ENCODE measurements at regions of chr20 and their contacts with region 1.

Region 1: GRCh38 chr20:50179507-50180016 is 11.1 kb upstream of the CEBPB start:
- DNase-seq: no peak
- H3K4me3 ChIP-seq: no peak overlapping the region
- H3K27ac ChIP-seq: no peak overlapping the region
- H3K4me1 ChIP-seq: no peaks in the 10 kb centered on the region
- H3K27me3 ChIP-seq: no peaks in the 10 kb centered on the region
- CTCF ChIP-seq: no peak

Region 2: GRCh38 chr20:50120897-50121693 is 58.5 kb before region 1 on chr20:
- CTCF ChIA-PET with region 1: no interaction called
- dilution Hi-C with region 1: no loop called
- in situ Hi-C with region 1: loop called in 1 of 2 experiments (anchors 10 kb)
- intact Hi-C with region 1: loop called (anchors 1 kb)
- DNase-seq: no peak
- H3K4me3 ChIP-seq: no peak overlapping the region
- H3K27ac ChIP-seq: no peak overlapping the region
- H3K4me1 ChIP-seq: peaks cover 4% of the 10 kb centered on the region
- H3K27me3 ChIP-seq: no peaks in the 10 kb centered on the region
- CTCF ChIP-seq: peak; percentile 96 to 99

Region 3: DNA sequence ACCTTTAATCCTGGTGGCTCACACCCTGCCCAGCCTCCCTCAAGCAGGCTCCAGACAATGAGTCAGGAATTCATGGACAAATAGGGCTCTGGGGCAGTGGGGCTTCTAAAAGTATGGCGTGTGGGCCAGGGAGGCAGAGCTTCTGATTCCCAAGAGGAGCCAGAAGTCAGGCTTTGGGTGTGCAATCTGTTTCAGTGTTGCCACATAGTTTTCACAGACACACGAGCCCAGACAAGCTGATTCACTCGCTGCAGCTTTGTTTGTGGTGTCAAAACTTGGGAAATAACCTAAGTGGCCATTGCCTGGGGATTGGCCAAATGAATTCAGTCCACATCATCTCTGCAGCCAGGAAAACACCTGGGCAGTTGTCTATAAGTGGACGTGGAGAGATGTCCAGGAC is 35.2 kb before region 1 on chr20:
- CTCF ChIA-PET with region 1: interaction called, 13 read pairs
- dilution Hi-C with region 1: no loop called
- in situ Hi-C with region 1: no loop called
- intact Hi-C with region 1: no loop called
- DNase-seq: peak; percentile 100
- H3K4me3 ChIP-seq: no peak overlapping the region
- H3K27ac ChIP-seq: peak overlapping the region; percentile 91
- H3K4me1 ChIP-seq: peaks cover 82% of the 10 kb centered on the region
- H3K27me3 ChIP-seq: no peaks in the 10 kb centered on the region
- CTCF ChIP-seq: no peak

Region 4: GRCh38 chr20:50427740-50428462 is 248.3 kb after region 1 on chr20:
- CTCF ChIA-PET with region 1: interaction called, 19 read pairs
- dilution Hi-C with region 1: no loop called
- in situ Hi-C with region 1: no loop called
- intact Hi-C with region 1: no loop called
- DNase-seq: peak; percentile 72
- H3K4me3 ChIP-seq: no peak overlapping the region
- H3K27ac ChIP-seq: peak overlapping the region; percentile 39
- H3K4me1 ChIP-seq: peaks cover 60% of the 10 kb centered on the region
- H3K27me3 ChIP-seq: no peaks in the 10 kb centered on the region
- CTCF ChIP-seq: no peak

Region 5: GRCh38 chr20:50957798-50958614 is 778.4 kb after region 1 on chr20 and contains the start of gene DPM1:
- CTCF ChIA-PET with region 1: no interaction called
- dilution Hi-C with region 1: no loop called
- in situ Hi-C with region 1: no loop called
- intact Hi-C with region 1: no loop called
- DNase-seq: peak; percentile 84
- H3K4me3 ChIP-seq: peak within 1 kb of the TSS; percentile 78 to 100 (median 99)
- H3K27ac ChIP-seq: peak within 1 kb of the TSS; percentile 99
- H3K4me1 ChIP-seq: peaks cover 29% of the 10 kb centered on the region
- H3K27me3 ChIP-seq: no peaks in the 10 kb centered on the region
- CTCF ChIP-seq: no peak
- total RNA-seq, gene DPM1: 63.5 to 63.9 TPM

Measured in mammary epithelial cell (primary cell).